ENCODE measurements at regions of chr6 and their contacts with region 1.

Region 1: DNA sequence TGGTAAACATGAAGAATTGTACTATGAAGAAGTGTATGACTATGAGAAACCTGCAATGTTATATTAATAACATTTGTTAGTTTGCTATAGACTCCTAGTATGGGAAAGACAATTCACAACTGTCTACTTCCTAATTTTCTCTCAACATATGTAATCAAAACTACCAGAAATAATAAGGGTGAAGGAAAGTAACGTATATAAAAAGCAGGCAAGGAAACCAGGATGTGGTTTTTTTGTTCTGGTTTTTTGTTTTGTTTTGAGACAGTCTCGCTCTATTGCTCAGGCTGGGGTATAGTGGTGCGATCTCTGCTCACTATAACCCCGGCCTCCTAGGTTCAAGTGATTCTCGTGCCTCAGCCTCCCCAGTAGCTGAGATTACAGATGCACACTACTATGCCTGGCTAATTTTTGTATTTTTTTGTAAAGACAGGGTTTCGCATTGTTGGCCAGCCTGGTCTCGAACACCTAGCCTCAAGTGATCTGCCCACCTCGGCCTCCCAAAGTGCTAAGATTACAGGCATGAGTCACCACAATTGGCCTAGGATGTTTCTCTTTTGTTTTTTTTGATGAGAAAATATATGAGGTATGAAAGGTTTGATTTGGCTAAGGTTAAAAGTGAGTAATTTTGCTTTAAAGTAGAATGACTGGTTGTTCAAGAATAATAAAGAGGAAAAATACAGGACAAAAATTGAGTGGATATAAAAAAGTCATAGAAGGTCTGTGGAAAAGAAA is 83.1 kb downstream of the PTCHD4 start:
- DNase-seq: no peak
- H3K4me3 Mint-ChIP-seq: no peak overlapping the region
- H3K27ac Mint-ChIP-seq: no peak overlapping the region
- H3K4me1 Mint-ChIP-seq: peaks cover 3% of the 10 kb centered on the region
- H3K27me3 Mint-ChIP-seq: peaks cover 4% of the 10 kb centered on the region

Region 2: GRCh38 chr6:47810885-47811284 is 217.0 kb before region 1 on chr6:
- CTCF ChIA-PET with region 1: no interaction called
- intact Hi-C with region 1: loop called (anchors 10 kb)
- DNase-seq: no peak
- H3K4me3 Mint-ChIP-seq: no peak overlapping the region
- H3K27ac Mint-ChIP-seq: no peak overlapping the region
- H3K4me1 Mint-ChIP-seq: no peaks in the 10 kb centered on the region
- H3K27me3 Mint-ChIP-seq: peaks cover 16% of the 10 kb centered on the region

Measured in activated naive CD4-positive, alpha-beta T cell treated with anti-CD3 and anti-CD28 coated beads for 36 hours (primary cell).